ENCODE measurements at regions of chr20 and their contacts with region 1.

Region 1: DNA sequence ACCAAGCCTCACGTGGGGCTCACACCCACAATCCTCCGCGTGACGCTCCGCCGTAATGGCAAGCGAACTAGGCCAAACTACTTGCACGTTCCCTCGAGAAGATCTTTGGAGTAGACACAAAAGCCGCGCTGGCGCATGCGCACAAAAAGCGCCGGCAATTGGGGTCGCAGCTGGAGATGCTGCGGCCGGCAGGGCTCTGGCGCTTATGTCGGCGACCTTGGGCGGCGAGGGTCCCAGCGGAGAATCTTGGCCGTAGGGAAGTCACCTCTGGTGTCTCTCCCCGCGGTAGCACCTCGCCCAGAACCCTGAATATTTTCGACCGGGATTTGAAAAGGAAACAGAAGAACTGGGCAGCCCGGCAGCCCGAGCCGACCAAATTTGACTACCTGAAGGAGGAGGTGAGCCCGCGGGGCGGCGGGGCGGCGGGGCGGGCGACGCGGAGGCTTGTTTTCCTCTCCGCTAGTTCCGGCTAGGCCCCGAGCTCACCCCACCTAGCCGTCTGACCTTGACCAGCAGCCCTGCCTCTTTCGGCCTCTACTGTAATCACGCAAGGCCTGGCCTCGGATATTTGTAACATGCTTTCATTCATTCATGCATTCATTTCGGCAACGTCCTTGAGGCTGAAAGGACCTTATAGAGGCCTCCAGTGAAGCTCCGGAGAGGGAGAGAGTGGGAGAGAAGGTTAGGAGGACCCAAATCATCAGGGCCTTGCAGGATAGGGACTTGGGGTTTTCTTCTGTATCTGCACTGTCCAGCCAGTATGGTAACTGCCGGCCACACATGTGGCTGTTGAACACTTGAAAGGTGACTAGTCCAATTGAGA is at the starts of genes ESF1 and NDUFAF5:
- DNase-seq: peak; percentile 98
- H3K4me3 Mint-ChIP-seq: peak within 1 kb of the TSS; percentile 92
- H3K27ac Mint-ChIP-seq: peak within 1 kb of the TSS; percentile 93
- H3K4me1 Mint-ChIP-seq: peaks cover 34% of the 10 kb centered on the region
- H3K27me3 Mint-ChIP-seq: no peaks in the 10 kb centered on the region
- total RNA-seq, gene ESF1: 32.8 and 34.5 TPM in 2 replicates
- total RNA-seq, gene NDUFAF5: 32.3 and 32.8 TPM in 2 replicates

Region 2: GRCh38 chr20:12925214-12925755 is 859.8 kb before region 1 on chr20:
- intact Hi-C with region 1: loop called (anchors 5 kb)
- DNase-seq: peak; percentile 74
- H3K4me3 Mint-ChIP-seq: no peak overlapping the region
- H3K27ac Mint-ChIP-seq: no peak overlapping the region
- H3K4me1 Mint-ChIP-seq: peaks cover 4% of the 10 kb centered on the region
- H3K27me3 Mint-ChIP-seq: peaks cover 2% of the 10 kb centered on the region

Region 3: DNA sequence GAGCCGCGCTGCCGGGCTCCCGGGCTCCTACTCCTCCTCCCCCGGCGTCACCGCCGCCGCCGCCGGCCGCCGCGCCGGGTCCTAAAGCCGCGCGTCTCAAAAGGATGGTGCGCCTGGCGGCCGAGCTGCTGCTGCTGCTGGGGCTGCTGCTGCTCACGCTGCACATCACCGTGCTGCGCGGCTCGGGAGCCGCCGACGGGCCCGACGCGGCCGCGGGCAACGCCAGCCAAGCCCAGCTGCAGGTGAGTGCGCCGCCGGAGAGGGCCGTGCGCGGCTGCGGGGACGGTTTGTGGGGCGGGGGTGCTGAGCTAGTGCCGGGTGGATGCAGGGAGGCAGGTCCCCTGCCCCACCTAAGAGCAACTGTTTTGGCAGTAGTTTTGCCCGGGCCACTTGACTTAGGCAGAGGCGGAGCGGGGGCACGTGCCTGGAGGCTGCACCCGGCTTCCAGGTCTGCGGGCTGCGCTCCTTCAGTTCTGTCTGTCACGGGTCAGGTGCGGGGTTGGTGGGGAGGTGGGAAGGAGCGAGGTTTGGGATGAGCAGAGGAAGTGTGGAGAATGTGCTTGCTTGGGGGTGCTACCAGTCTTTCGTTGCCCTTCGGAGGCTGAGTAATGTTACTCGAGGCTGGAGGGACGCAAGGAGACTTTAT is 563.3 kb before region 1 on chr20:
- intact Hi-C with region 1: loop called (anchors 10 kb)
- DNase-seq: peak; percentile 93
- H3K4me3 Mint-ChIP-seq: peak overlapping the region; percentile 89
- H3K27ac Mint-ChIP-seq: peak overlapping the region; percentile 81
- H3K4me1 Mint-ChIP-seq: peaks cover 16% of the 10 kb centered on the region
- H3K27me3 Mint-ChIP-seq: peaks cover 57% of the 10 kb centered on the region

Region 4: DNA sequence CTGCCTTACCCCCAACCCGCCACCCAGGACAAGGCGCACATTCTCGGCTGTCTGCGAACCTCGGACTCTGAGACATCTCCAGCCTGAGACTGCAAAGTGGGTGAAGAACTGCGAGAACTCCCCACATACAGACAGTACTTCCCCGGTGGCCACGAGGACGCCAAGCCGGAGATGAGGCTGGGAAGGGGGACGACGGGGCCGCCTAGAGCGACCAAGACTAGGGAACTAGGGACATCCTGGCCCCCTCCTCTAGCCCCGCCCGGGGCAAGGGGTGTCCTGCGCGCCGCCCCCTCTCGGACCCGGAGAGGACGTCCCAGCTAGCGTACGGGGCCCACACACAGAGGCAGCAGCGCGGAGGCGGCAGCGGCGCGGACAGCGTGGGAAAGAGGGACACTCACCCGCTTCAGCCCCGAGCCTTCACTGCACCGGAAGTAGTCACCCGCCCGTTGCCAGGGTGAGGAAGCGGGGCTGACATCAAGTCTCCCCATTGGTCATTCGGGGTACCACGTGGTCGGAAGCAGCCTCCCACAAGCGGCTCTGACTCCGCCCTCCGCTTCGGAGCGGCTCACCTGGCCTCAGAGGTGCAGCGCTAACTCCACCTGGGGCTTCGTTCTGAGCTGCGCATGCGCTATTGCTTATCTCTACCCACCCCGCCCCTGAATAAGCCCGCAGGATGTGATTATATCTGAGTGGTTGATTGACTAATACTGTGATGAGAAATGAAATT is 146.4 kb before region 1 on chr20 and contains the start of gene TASP1:
- intact Hi-C with region 1: loop called (anchors 1 kb)
- DNase-seq: peak; percentile 98
- H3K4me3 Mint-ChIP-seq: peak within 1 kb of the TSS; percentile 99
- H3K27ac Mint-ChIP-seq: peak within 1 kb of the TSS; percentile 85
- H3K4me1 Mint-ChIP-seq: peaks cover 20% of the 10 kb centered on the region
- H3K27me3 Mint-ChIP-seq: peaks cover 3% of the 10 kb centered on the region
- total RNA-seq, gene TASP1: 14.6 and 14.9 TPM in 2 replicates

Region 5: GRCh38 chr20:13819885-13820645 is 35.0 kb after region 1 on chr20:
- intact Hi-C with region 1: loop called (anchors 1 kb)
- DNase-seq: peak; percentile 61
- H3K4me3 Mint-ChIP-seq: no peak overlapping the region
- H3K27ac Mint-ChIP-seq: no peak overlapping the region
- H3K4me1 Mint-ChIP-seq: peaks cover 14% of the 10 kb centered on the region
- H3K27me3 Mint-ChIP-seq: no peaks in the 10 kb centered on the region

Region 6: GRCh38 chr20:14030991-14031390 is 245.9 kb after region 1 on chr20:
- intact Hi-C with region 1: no loop called
- DNase-seq: no peak
- H3K4me3 Mint-ChIP-seq: no peak overlapping the region
- H3K27ac Mint-ChIP-seq: no peak overlapping the region
- H3K4me1 Mint-ChIP-seq: no peaks in the 10 kb centered on the region
- H3K27me3 Mint-ChIP-seq: no peaks in the 10 kb centered on the region